ENCODE measurements at regions of chr6 and their contacts with region 1.

Region 1: GRCh38 chr6:30616811-30617564 is at the start of gene PPP1R10:
- DNase-seq: peak; percentile 94
- CTCF ChIP-seq: no peak

Region 2: GRCh38 chr6:30571075-30571768 is 45.8 kb before region 1 on chr6 and contains the start of gene ABCF1:
- CTCF ChIA-PET with region 1: no interaction called
- POLR2A ChIA-PET with region 1: interaction called, 19 read pairs
- DNase-seq: peak; percentile 99
- CTCF ChIP-seq: no peak

Region 3: DNA sequence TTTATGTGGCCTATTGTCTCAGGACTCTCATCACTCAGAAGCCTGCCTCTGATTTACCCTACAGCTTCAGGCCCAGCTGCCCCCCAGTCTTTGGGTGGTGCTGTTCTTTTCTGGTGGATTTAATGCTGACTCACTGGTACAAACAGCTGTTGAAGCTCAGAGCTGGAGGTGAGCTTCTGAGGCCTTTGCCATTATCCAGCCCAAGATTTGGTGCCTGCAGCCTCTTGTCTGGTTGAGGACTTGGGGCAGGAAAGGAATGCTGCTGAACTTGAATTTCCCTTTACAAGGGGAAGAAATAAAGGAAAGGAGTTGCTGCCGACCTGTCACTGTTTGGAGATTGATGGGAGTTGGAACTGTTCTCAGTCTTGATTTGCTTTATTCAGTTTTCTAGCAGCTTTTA is 26.0 kb before region 1 on chr6:
- CTCF ChIA-PET with region 1: interaction called, 56 read pairs
- POLR2A ChIA-PET with region 1: interaction called, 12 read pairs
- DNase-seq: no peak
- CTCF ChIP-seq: no peak

Region 4: GRCh38 chr6:30600451-30600961 is 16.5 kb before region 1 on chr6:
- CTCF ChIA-PET with region 1: interaction called, 56 read pairs
- POLR2A ChIA-PET with region 1: interaction called, 72 read pairs
- DNase-seq: no peak
- CTCF ChIP-seq: no peak

Region 5: DNA sequence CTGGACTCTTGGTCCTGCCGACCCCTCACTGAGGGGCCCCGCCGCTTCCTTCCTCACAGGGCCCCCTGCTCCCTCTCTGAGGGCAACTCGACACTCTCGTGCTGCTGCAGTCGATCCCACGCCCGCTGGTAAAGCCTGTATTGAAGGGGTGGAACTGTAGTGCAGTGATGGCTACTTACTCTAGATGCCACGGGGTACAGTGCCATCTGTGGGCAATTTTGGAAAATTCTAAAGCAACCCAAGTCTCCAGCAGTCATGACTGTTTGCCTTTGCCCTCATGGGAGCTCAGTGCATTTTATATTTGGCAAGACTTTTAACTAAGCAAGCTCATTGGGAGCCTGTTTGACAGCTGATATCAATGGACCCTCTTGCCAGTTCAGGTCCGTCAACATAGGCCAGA is 23.5 kb after region 1 on chr6:
- CTCF ChIA-PET with region 1: interaction called, 3 read pairs
- POLR2A ChIA-PET with region 1: interaction called, 11 read pairs
- DNase-seq: no peak
- CTCF ChIP-seq: no peak

Region 6: GRCh38 chr6:30885999-30886896 is 269.3 kb after region 1 on chr6:
- CTCF ChIA-PET with region 1: no interaction called
- POLR2A ChIA-PET with region 1: no interaction called
- DNase-seq: peak; percentile 12
- CTCF ChIP-seq: no peak

Region 7: GRCh38 chr6:31580807-31581433 is 963.9 kb after region 1 on chr6:
- CTCF ChIA-PET with region 1: no interaction called
- POLR2A ChIA-PET with region 1: interaction called, 10 read pairs
- DNase-seq: peak; percentile 87
- CTCF ChIP-seq: peak; percentile 89

Measured in GM10248 (cell line).